MCF 10A (cell line): ENCODE measurements at regions of chr1 and their contacts with region 1.

Region 1: GRCh38 chr1:66331657-66332547 is 202.1 kb upstream of the SGIP1 start:
- DNase-seq: peak; percentile 86
- H3K4me3 Mint-ChIP-seq: peak overlapping the region; percentile 79
- H3K27ac Mint-ChIP-seq: peak overlapping the region; percentile 87
- H3K4me1 Mint-ChIP-seq: peaks cover 38% of the 10 kb centered on the region
- H3K27me3 Mint-ChIP-seq: no peaks in the 10 kb centered on the region
- CTCF ChIP-seq: peak; percentile 12

Region 2: GRCh38 chr1:65792669-65793358 is 539.1 kb before region 1 on chr1 and contains the start of gene PDE4B:
- CTCF ChIA-PET with region 1: no interaction called
- POLR2A ChIA-PET with region 1: no interaction called
- intact Hi-C with region 1: no loop called
- DNase-seq: no peak
- H3K4me3 Mint-ChIP-seq: no peak within 1 kb of the TSS
- H3K27ac Mint-ChIP-seq: no peak within 1 kb of the TSS
- H3K4me1 Mint-ChIP-seq: peaks cover 5% of the 10 kb centered on the region
- H3K27me3 Mint-ChIP-seq: peaks cover 53% of the 10 kb centered on the region
- CTCF ChIP-seq: no peak
- total RNA-seq, gene PDE4B: 2.8 and 3.3 TPM in 2 replicates

Region 3: GRCh38 chr1:66262211-66262963 is 69.5 kb before region 1 on chr1:
- CTCF ChIA-PET with region 1: interaction called, 9 read pairs
- POLR2A ChIA-PET with region 1: interaction called, 65 read pairs
- intact Hi-C with region 1: no loop called
- DNase-seq: peak; percentile 96
- H3K4me3 Mint-ChIP-seq: peak overlapping the region; percentile 9
- H3K27ac Mint-ChIP-seq: peak overlapping the region; percentile 86
- H3K4me1 Mint-ChIP-seq: peaks cover 43% of the 10 kb centered on the region
- H3K27me3 Mint-ChIP-seq: no peaks in the 10 kb centered on the region
- CTCF ChIP-seq: no peak

Region 4: GRCh38 chr1:66282343-66282852 is 49.5 kb before region 1 on chr1:
- CTCF ChIA-PET with region 1: interaction called, 6 read pairs
- POLR2A ChIA-PET with region 1: interaction called, 26 read pairs
- intact Hi-C with region 1: no loop called
- DNase-seq: peak; percentile 87
- H3K4me3 Mint-ChIP-seq: no peak overlapping the region
- H3K27ac Mint-ChIP-seq: peak overlapping the region; percentile 90
- H3K4me1 Mint-ChIP-seq: peaks cover 22% of the 10 kb centered on the region
- H3K27me3 Mint-ChIP-seq: no peaks in the 10 kb centered on the region
- CTCF ChIP-seq: no peak

Region 5: GRCh38 chr1:66300972-66301451 is 30.9 kb before region 1 on chr1:
- CTCF ChIA-PET with region 1: interaction called, 7 read pairs
- POLR2A ChIA-PET with region 1: interaction called, 92 read pairs
- intact Hi-C with region 1: no loop called
- DNase-seq: peak; percentile 39
- H3K4me3 Mint-ChIP-seq: peak overlapping the region; percentile 56
- H3K27ac Mint-ChIP-seq: peak overlapping the region; percentile 96
- H3K4me1 Mint-ChIP-seq: peaks cover 25% of the 10 kb centered on the region
- H3K27me3 Mint-ChIP-seq: no peaks in the 10 kb centered on the region
- CTCF ChIP-seq: no peak

Region 6: DNA sequence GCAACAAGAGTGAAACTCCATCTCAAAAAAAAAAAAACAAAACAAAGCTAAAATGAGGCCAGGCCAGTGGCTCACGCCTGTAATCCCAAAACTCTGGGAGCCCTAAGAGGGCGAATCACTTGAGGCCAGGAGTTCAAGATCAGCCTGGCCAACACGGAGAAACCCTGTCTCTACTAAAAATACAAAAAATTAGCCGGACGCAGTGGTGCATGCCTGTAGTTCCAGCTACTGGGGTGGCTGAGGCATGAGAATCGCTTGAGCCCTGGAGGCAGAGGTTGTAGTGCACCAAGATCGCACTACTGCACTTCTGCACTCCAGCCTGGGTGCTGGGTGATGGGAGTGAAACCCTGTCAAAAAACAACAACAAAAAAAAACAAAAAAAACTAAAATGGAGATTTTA is 10.8 kb after region 1 on chr1:
- CTCF ChIA-PET with region 1: interaction called, 6 read pairs
- POLR2A ChIA-PET with region 1: interaction called, 36 read pairs
- intact Hi-C with region 1: no loop called
- DNase-seq: no peak
- H3K4me3 Mint-ChIP-seq: no peak overlapping the region
- H3K27ac Mint-ChIP-seq: no peak overlapping the region
- H3K4me1 Mint-ChIP-seq: peaks cover 7% of the 10 kb centered on the region
- H3K27me3 Mint-ChIP-seq: no peaks in the 10 kb centered on the region
- CTCF ChIP-seq: no peak

Region 7: DNA sequence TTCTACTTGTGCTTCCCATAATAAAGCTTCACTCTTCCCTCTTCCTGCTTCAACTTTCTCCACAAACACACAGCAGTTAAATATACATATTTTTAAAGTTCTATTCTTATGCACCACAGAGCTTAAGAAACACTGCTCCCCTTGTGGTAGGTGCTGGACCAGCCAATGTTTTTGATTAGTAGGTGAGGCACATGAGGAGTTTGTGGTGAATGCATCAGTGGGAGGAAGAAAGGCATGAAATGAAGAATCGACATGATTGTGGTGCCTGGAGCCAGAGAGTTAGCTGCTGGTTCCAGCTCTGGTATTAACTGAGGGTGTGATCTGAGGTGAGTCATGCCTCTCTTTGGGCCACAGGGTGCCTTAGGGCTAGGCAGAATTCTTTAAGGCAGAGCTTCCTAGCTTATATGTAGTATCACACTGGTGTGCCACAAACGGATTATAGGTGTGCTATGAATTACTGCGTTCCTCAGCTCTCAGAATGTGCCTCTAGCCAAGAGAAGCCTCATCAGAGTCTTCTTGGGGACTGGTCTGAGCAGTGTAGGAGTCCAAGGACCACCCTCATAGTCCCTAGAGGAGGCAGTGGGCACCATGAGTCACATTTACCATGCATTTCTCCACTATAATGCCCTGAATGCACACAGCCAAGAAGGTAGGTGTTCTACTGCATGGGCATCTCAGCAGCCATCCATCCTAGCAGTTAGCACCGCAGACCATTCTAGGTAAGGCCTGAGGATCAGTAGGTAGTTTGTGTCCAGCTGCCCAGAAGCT is 104.7 kb after region 1 on chr1:
- CTCF ChIA-PET with region 1: interaction called, 27 read pairs
- POLR2A ChIA-PET with region 1: interaction called, 43 read pairs
- intact Hi-C with region 1: loop called (anchors 2 kb)
- DNase-seq: peak; percentile 89
- H3K4me3 Mint-ChIP-seq: no peak overlapping the region
- H3K27ac Mint-ChIP-seq: peak overlapping the region; percentile 77
- H3K4me1 Mint-ChIP-seq: peaks cover 27% of the 10 kb centered on the region
- H3K27me3 Mint-ChIP-seq: no peaks in the 10 kb centered on the region
- CTCF ChIP-seq: peak; percentile 38